Mammary epithelial cell (primary cell): ENCODE measurements at regions of chr22 and their contacts with region 1.

Region 1: GRCh38 chr22:24175160-24175808 is 6.0 kb upstream of the SUSD2 start:
- DNase-seq: peak; percentile 45
- H3K4me3 ChIP-seq: no peak overlapping the region
- H3K27ac ChIP-seq: no peak overlapping the region
- H3K4me1 ChIP-seq: no peaks in the 10 kb centered on the region
- H3K27me3 ChIP-seq: no peaks in the 10 kb centered on the region
- CTCF ChIP-seq: peak; percentile 74 to 88

Region 2: GRCh38 chr22:24011735-24012068 is 163.6 kb before region 1 on chr22:
- CTCF ChIA-PET with region 1: interaction called, 12 read pairs
- dilution Hi-C with region 1: no loop called
- in situ Hi-C with region 1: no loop called
- intact Hi-C with region 1: no loop called
- DNase-seq: no peak
- H3K4me3 ChIP-seq: peak overlapping the region; percentile 65 to 91 (median 83)
- H3K27ac ChIP-seq: peak overlapping the region; percentile 68
- H3K4me1 ChIP-seq: peaks cover 4% of the 10 kb centered on the region
- H3K27me3 ChIP-seq: no peaks in the 10 kb centered on the region
- CTCF ChIP-seq: no peak

Region 3: GRCh38 chr22:24161909-24162308 is 13.4 kb before region 1 on chr22:
- CTCF ChIA-PET with region 1: no interaction called
- dilution Hi-C with region 1: no loop called
- in situ Hi-C with region 1: no loop called
- intact Hi-C with region 1: no loop called
- DNase-seq: no peak
- H3K4me3 ChIP-seq: no peak overlapping the region
- H3K27ac ChIP-seq: no peak overlapping the region
- H3K4me1 ChIP-seq: peaks cover 12% of the 10 kb centered on the region
- H3K27me3 ChIP-seq: no peaks in the 10 kb centered on the region
- CTCF ChIP-seq: no peak

Region 4: GRCh38 chr22:24208012-24208749 is 32.9 kb after region 1 on chr22:
- CTCF ChIA-PET with region 1: no interaction called
- dilution Hi-C with region 1: no loop called
- in situ Hi-C with region 1: no loop called
- intact Hi-C with region 1: no loop called
- DNase-seq: peak; percentile 97
- H3K4me3 ChIP-seq: no peak overlapping the region
- H3K27ac ChIP-seq: peak overlapping the region; percentile 71
- H3K4me1 ChIP-seq: peaks cover 33% of the 10 kb centered on the region
- H3K27me3 ChIP-seq: no peaks in the 10 kb centered on the region
- CTCF ChIP-seq: no peak

Region 5: GRCh38 chr22:24338726-24339451 is 163.6 kb after region 1 on chr22:
- CTCF ChIA-PET with region 1: no interaction called
- dilution Hi-C with region 1: no loop called
- in situ Hi-C with region 1: no loop called
- intact Hi-C with region 1: no loop called
- DNase-seq: peak; percentile 6
- H3K4me3 ChIP-seq: no peak overlapping the region
- H3K27ac ChIP-seq: no peak overlapping the region
- H3K4me1 ChIP-seq: peaks cover 13% of the 10 kb centered on the region
- H3K27me3 ChIP-seq: no peaks in the 10 kb centered on the region
- CTCF ChIP-seq: no peak